ENCODE measurements at regions of chr10 and their contacts with region 1.

Region 1: GRCh38 chr10:78258323-78259030 is 224.8 kb downstream of the RPS24 start:
- DNase-seq: no peak
- H3K4me3 ChIP-seq: no peak overlapping the region
- H3K27ac ChIP-seq: peak overlapping the region in 1 of 2 experiments; percentile 5; a peak in 1 of 4 replicates
- H3K4me1 ChIP-seq: peaks cover 38 to 46% of the 10 kb centered on the region in 2 experiments
- H3K27me3 ChIP-seq: no peaks in the 10 kb centered on the region
- CTCF ChIP-seq: no peak
- EP300 ChIP-seq: no peak
- RAD21 ChIP-seq: no peak

Region 2: DNA sequence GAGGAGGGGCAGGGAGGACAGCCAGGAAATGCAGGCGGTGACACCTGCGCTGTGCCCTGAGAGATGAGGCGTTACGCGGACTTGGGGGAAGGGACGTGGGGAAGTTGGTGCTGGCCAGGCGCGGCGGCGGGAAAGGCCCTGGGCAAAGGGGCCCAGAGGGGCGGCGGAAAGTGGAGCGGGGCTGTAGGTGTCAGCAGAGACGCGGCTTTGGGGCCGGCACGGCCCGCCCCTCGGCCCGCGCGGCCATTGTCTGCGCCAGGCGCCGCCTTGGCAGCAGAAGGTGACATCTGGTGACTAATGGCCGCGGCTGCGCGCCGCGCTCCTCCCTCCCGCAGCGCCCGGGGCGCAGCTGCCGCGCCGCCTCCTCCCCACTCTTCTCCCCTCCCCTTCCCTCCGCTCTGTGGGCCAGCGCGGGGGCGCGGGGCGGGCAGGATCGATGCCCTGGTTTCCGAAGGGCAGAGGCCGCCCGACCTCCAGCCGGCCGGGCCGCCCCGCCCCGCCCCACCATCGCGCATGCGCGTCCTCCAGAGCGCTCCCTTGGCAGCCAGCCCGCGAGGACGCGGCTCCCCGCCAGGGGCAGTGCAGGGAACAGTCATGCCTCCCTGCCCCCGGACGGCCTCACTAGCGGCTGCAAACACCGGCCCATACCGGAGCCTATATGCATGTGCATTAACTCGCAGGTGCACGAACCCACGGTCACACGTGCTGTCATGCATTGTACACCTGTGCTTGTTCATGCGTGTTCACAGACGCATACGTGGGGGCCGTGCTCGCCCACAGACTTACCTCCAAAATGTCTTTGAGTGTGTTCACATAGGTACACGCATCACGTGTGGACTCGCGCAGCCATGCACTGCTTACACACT is 44.7 kb after region 1 on chr10:
- CTCF ChIA-PET with region 1: interaction called, 17 read pairs
- POLR2A ChIA-PET with region 1: interaction called, 4 read pairs
- DNase-seq: peak; percentile 99
- H3K4me3 ChIP-seq: peak overlapping the region; percentile 51 to 72
- H3K27ac ChIP-seq: peak overlapping the region; percentile 71 to 99
- H3K4me1 ChIP-seq: peaks cover 15 to 41% of the 10 kb centered on the region in 2 experiments; a peak in 3 of 4 replicates
- H3K27me3 ChIP-seq: no peaks in the 10 kb centered on the region
- CTCF ChIP-seq: peak; percentile 66
- EP300 ChIP-seq: peak; percentile 70 to 79; a peak in 3 of 4 replicates
- RAD21 ChIP-seq: peak; percentile 73

Measured in SK-N-SH (cell line).